ENCODE measurements at regions of chr9 and their contacts with region 1.

Region 1: GRCh38 chr9:113657703-113658544 is 194.4 kb downstream of the RGS3 start:
- DNase-seq: peak; percentile 67 to 76 (median 68)
- H3K4me3 ChIP-seq: no peak overlapping the region
- H3K4me3 Mint-ChIP-seq: no peak overlapping the region
- H3K27ac ChIP-seq: no peak overlapping the region
- H3K27ac Mint-ChIP-seq: peak overlapping the region in 2 of 7 donors; percentile 65 to 67
- H3K4me1 ChIP-seq: no peaks in the 10 kb centered on the region
- H3K4me1 Mint-ChIP-seq: peaks cover 0 to 6% (median 2%) of the 10 kb centered on the region in 4 donors
- H3K27me3 ChIP-seq: no peaks in the 10 kb centered on the region
- H3K27me3 Mint-ChIP-seq: peaks cover 10 to 16% of the 10 kb centered on the region in 2 donors

Region 2: DNA sequence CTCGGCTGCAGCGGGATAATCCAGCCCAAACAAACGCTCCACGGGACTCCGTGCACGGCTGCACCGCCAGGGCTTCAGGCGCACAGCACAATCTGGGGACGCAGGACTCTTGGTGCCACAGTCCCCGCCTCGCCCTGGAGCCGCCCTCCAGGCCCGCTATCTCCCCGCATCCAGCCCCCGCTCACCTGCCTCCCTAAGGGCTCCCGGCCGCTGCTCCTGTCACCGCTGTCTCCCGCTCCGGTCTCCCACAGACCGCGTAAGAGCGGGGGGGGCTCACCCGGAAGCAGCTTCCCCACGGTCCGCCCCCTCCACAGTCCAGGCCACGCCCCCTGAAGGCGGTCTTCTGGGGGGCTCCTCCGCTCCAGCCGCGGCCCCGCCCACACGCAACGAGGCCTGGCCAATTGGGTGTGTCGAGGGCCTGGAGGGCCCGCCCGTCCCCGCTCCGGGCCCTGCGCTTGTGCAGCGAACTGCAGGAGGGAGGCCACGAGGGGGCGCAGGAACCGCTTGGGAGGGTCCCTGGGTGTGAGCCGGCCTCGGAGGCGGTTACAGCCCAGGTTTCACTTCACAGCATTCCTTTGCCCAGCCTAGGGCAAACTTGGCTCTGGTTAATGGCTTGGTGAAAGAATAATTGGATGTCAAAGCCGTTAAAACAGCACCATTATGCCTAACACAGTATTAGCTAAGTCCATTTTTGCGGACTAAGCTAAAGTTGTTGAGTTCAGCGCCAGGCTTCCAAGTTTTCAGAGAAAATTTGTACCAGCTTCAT is 256.7 kb before region 1 on chr9 and contains the start of gene ALAD:
- CTCF ChIA-PET with region 1: interaction called, 72 read pairs
- POLR2A ChIA-PET with region 1: interaction called, 8 read pairs
- intact Hi-C with region 1: loop called (anchors 1 kb)
- DNase-seq: peak; percentile 98 to 100 (median 99)
- H3K4me3 ChIP-seq: peak within 1 kb of the TSS; percentile 34 to 96
- H3K4me3 Mint-ChIP-seq: peak within 1 kb of the TSS; percentile 91 to 98 (median 94)
- H3K27ac ChIP-seq: peak within 1 kb of the TSS; percentile 52
- H3K27ac Mint-ChIP-seq: peak within 1 kb of the TSS; percentile 77 to 94 (median 89)
- H3K4me1 ChIP-seq: peaks cover 16% of the 10 kb centered on the region
- H3K4me1 Mint-ChIP-seq: peaks cover 14 to 31% (median 23%) of the 10 kb centered on the region in 4 donors
- H3K27me3 ChIP-seq: no peaks in the 10 kb centered on the region
- H3K27me3 Mint-ChIP-seq: no peaks in the 10 kb centered on the region
- total RNA-seq, gene ALAD: 39.9 TPM

Region 3: DNA sequence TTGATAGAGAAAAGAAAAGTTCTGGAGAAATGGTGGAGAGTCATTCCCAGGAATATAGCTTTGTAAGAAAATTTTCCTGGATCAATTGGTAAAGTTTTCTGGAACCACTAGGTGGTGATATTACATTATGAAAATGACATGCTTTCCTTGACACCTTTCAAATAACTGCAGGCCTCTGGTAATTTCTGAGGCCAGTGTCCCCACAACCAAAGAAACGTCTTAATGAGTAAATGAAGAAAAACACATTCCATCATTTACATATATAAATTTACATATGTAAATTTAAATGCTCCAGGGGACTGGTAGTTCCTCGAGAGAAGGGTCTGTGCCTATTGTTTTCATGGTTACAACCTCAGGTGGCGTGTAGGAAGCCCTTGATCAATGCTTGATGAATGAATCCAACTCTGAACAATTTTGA is 211.6 kb before region 1 on chr9:
- CTCF ChIA-PET with region 1: interaction called, 246 read pairs
- POLR2A ChIA-PET with region 1: interaction called, 9 read pairs
- intact Hi-C with region 1: loop called (anchors 2 kb)
- DNase-seq: peak in 4 of 5 donors; percentile 38 to 53 (median 43)
- H3K4me3 ChIP-seq: no peak overlapping the region
- H3K4me3 Mint-ChIP-seq: no peak overlapping the region
- H3K27ac ChIP-seq: no peak overlapping the region
- H3K27ac Mint-ChIP-seq: no peak overlapping the region
- H3K4me1 ChIP-seq: no peaks in the 10 kb centered on the region
- H3K4me1 Mint-ChIP-seq: peaks cover 0 to 1% (median 0%) of the 10 kb centered on the region in 4 donors
- H3K27me3 ChIP-seq: no peaks in the 10 kb centered on the region
- H3K27me3 Mint-ChIP-seq: no peaks in the 10 kb centered on the region

Region 4: DNA sequence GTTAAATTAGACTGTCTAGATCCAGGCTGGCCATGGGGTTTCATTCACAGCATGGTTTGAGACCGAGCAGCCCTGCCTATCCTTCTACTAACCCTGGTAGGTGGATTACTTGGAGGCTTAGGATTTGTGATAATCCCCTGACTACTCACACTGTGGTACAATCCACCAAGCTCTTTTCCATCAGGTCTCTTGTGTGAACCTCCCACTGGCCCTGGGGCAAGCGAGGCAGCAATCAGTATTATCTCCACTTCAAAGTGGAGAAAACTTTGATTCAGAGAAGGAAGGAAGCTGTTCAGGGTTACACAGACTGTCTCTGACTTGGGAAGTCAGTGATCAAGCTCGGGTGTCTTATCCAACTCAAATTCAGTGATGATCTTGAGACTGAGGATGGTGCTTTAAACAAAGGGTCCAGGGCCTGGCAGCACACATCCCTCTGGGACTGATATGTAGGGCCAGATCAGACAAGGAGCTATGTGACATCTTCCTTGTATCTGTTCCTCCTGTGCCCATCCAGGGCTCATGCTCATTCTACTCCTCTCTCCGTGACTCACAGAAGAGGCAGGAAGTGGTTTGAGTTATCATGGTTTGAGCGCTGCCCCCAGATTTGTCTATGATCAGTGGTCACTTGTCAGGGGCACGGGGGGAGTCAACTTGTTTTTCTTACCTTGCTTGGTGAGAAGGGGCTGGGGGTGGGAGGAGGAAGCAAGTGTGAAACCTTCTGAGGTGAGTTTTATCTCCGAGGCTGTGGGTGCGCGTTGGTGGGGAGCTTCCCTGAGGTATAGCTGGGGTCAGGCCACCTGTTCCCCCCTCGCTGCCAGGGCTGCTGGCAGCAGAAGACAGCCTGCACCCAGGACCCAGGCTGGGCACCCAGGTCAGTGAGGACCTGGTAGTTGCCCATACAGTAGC is 145.8 kb before region 1 on chr9:
- CTCF ChIA-PET with region 1: interaction called, 11 read pairs
- POLR2A ChIA-PET with region 1: no interaction called
- intact Hi-C with region 1: no loop called
- DNase-seq: peak; percentile 57 to 90 (median 62)
- H3K4me3 ChIP-seq: peak overlapping the region in 1 of 2 donors; percentile 21
- H3K4me3 Mint-ChIP-seq: peak overlapping the region; percentile 73 to 91 (median 84)
- H3K27ac ChIP-seq: peak overlapping the region; percentile 57
- H3K27ac Mint-ChIP-seq: peak overlapping the region; percentile 89 to 96 (median 93)
- H3K4me1 ChIP-seq: peaks cover 60% of the 10 kb centered on the region
- H3K4me1 Mint-ChIP-seq: peaks cover 39 to 68% (median 54%) of the 10 kb centered on the region in 4 donors
- H3K27me3 ChIP-seq: no peaks in the 10 kb centered on the region
- H3K27me3 Mint-ChIP-seq: no peaks in the 10 kb centered on the region

Region 5: GRCh38 chr9:113591001-113591898 is 66.7 kb before region 1 on chr9:
- CTCF ChIA-PET with region 1: interaction called, 160 read pairs
- POLR2A ChIA-PET with region 1: no interaction called
- intact Hi-C with region 1: loop called (anchors 1 kb)
- DNase-seq: peak in 4 of 5 donors; percentile 25 to 33 (median 28)
- H3K4me3 ChIP-seq: no peak overlapping the region
- H3K4me3 Mint-ChIP-seq: no peak overlapping the region
- H3K27ac ChIP-seq: no peak overlapping the region
- H3K27ac Mint-ChIP-seq: peak overlapping the region in 3 of 7 donors; percentile 41 to 74 (median 73)
- H3K4me1 ChIP-seq: peaks cover 17% of the 10 kb centered on the region
- H3K4me1 Mint-ChIP-seq: peaks cover 18 to 46% (median 25%) of the 10 kb centered on the region in 4 donors
- H3K27me3 ChIP-seq: no peaks in the 10 kb centered on the region
- H3K27me3 Mint-ChIP-seq: no peaks in the 10 kb centered on the region

Region 6: GRCh38 chr9:113675475-113675941 is 17.6 kb after region 1 on chr9:
- CTCF ChIA-PET with region 1: interaction called, 26 read pairs
- POLR2A ChIA-PET with region 1: no interaction called
- intact Hi-C with region 1: no loop called
- DNase-seq: no peak
- H3K4me3 ChIP-seq: no peak overlapping the region
- H3K4me3 Mint-ChIP-seq: no peak overlapping the region
- H3K27ac ChIP-seq: no peak overlapping the region
- H3K27ac Mint-ChIP-seq: no peak overlapping the region
- H3K4me1 ChIP-seq: no peaks in the 10 kb centered on the region
- H3K4me1 Mint-ChIP-seq: no peaks in the 10 kb centered on the region
- H3K27me3 ChIP-seq: no peaks in the 10 kb centered on the region
- H3K27me3 Mint-ChIP-seq: peaks cover 32 to 34% of the 10 kb centered on the region in 2 donors

Region 7: GRCh38 chr9:113687680-113688371 is 29.9 kb after region 1 on chr9:
- CTCF ChIA-PET with region 1: no interaction called
- POLR2A ChIA-PET with region 1: no interaction called
- intact Hi-C with region 1: no loop called
- DNase-seq: no peak
- H3K4me3 ChIP-seq: no peak overlapping the region
- H3K4me3 Mint-ChIP-seq: peak overlapping the region in 1 of 8 donors; percentile 7
- H3K27ac ChIP-seq: no peak overlapping the region
- H3K27ac Mint-ChIP-seq: no peak overlapping the region
- H3K4me1 ChIP-seq: peaks cover 5% of the 10 kb centered on the region
- H3K4me1 Mint-ChIP-seq: peaks cover 0 to 21% (median 6%) of the 10 kb centered on the region in 4 donors
- H3K27me3 ChIP-seq: peaks cover 20% of the 10 kb centered on the region
- H3K27me3 Mint-ChIP-seq: peaks cover 34 to 54% of the 10 kb centered on the region in 2 donors